Activated CD8-positive, alpha-beta T cell treated with anti-CD3 and anti-CD28 coated beads for 36 hours (primary cell): ENCODE measurements at regions of chr2 and their contacts with region 1.

Region 1: GRCh38 chr2:54665436-54665856 is 58.0 kb upstream of the EML6 start:
- DNase-seq: peak; percentile 75
- ATAC-seq: peak; percentile 89
- H3K4me3 Mint-ChIP-seq: no peak overlapping the region
- H3K27ac Mint-ChIP-seq: peak overlapping the region; percentile 82
- H3K4me1 Mint-ChIP-seq: peaks cover 8% of the 10 kb centered on the region
- H3K27me3 Mint-ChIP-seq: no peaks in the 10 kb centered on the region
- CTCF ChIP-seq: peak; percentile 72

Region 2: DNA sequence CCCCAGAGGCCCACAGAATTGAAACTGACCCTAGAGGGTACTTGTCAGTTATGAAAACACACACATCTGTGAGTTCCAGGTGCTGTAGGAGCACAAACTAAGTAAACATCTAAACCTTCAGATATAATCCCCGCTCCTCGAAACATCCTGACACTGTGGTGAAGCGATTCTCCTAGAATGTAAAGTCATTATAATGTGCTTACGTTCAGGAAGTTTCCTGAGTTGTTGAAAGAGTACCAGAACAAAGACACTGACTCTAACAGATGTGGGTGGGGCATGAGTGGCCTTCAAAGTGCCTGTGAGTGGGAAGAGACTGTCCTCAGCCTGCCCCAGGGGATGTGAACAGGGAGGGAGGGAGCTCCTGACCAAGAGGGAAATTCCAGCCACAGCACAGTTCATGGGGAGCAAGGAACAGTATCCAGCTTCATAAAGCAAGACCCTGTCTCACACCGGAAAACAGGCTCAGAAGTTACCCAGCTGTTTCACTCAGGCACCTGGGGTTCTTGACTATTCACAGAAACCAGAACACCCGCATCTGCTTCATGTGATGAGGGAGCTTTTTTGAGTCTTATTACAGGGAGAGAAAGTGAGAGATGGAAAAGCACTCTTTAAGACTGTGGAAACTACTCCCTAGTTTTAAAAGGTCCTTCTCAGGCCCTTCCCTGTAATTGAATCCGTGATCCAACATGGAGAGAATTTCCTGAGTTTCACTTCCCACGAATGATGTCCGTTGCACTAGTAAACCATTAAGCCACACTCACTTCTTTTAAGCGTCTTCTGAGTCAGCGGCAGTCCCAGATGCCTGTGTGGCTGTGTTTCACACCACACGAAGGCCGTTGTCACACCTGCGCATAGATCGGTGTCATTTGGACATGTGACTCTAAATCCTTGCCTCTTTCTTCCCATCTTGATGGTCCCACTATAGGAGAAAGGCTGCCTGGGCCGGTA is 30.6 kb before region 1 on chr2:
- CTCF ChIA-PET with region 1: interaction called, 10 read pairs
- POLR2A ChIA-PET with region 1: no interaction called
- intact Hi-C with region 1: no loop called
- DNase-seq: peak; percentile 21
- ATAC-seq: peak; percentile 59
- H3K4me3 Mint-ChIP-seq: no peak overlapping the region
- H3K27ac Mint-ChIP-seq: peak overlapping the region; percentile 71
- H3K4me1 Mint-ChIP-seq: peaks cover 30% of the 10 kb centered on the region
- H3K27me3 Mint-ChIP-seq: no peaks in the 10 kb centered on the region
- CTCF ChIP-seq: no peak

Region 3: GRCh38 chr2:54691445-54692135 is 26.1 kb after region 1 on chr2:
- CTCF ChIA-PET with region 1: interaction called, 65 read pairs
- POLR2A ChIA-PET with region 1: no interaction called
- intact Hi-C with region 1: no loop called
- DNase-seq: no peak
- ATAC-seq: no peak
- H3K4me3 Mint-ChIP-seq: no peak overlapping the region
- H3K27ac Mint-ChIP-seq: no peak overlapping the region
- H3K4me1 Mint-ChIP-seq: peaks cover 7% of the 10 kb centered on the region
- H3K27me3 Mint-ChIP-seq: peaks cover 1% of the 10 kb centered on the region
- CTCF ChIP-seq: no peak

Region 4: GRCh38 chr2:54723131-54723995 is 57.9 kb after region 1 on chr2 and contains the start of gene EML6:
- CTCF ChIA-PET with region 1: interaction called, 13 read pairs
- POLR2A ChIA-PET with region 1: no interaction called
- intact Hi-C with region 1: no loop called
- DNase-seq: peak; percentile 99
- ATAC-seq: peak; percentile 99
- H3K4me3 Mint-ChIP-seq: peak within 1 kb of the TSS; percentile 82
- H3K27ac Mint-ChIP-seq: peak within 1 kb of the TSS; percentile 70
- H3K4me1 Mint-ChIP-seq: peaks cover 15% of the 10 kb centered on the region
- H3K27me3 Mint-ChIP-seq: peaks cover 33% of the 10 kb centered on the region
- CTCF ChIP-seq: peak; percentile 28
- total RNA-seq, gene EML6: 1.2 to 1.7 TPM